Gastrocnemius medialis (tissue), 4 donors: ENCODE measurements at regions of chr12 and their contacts with region 1.

Region 1: GRCh38 chr12:49967042-49967776 is 5.5 kb downstream of the AQP5 start:
- DNase-seq: peak; percentile 48 to 64
- ATAC-seq: peak; percentile 76 to 86
- H3K4me3 ChIP-seq: peak overlapping the region; percentile 36 to 50 (median 40)
- H3K27ac ChIP-seq: no peak overlapping the region
- H3K4me1 ChIP-seq: peaks cover 0 to 5% of the 10 kb centered on the region in 2 donors
- H3K27me3 ChIP-seq: peaks cover 4 to 22% (median 17%) of the 10 kb centered on the region in 3 donors
- CTCF ChIP-seq: peak; percentile 66 to 91 (median 88)
- POLR2A ChIP-seq: no peak

Region 2: DNA sequence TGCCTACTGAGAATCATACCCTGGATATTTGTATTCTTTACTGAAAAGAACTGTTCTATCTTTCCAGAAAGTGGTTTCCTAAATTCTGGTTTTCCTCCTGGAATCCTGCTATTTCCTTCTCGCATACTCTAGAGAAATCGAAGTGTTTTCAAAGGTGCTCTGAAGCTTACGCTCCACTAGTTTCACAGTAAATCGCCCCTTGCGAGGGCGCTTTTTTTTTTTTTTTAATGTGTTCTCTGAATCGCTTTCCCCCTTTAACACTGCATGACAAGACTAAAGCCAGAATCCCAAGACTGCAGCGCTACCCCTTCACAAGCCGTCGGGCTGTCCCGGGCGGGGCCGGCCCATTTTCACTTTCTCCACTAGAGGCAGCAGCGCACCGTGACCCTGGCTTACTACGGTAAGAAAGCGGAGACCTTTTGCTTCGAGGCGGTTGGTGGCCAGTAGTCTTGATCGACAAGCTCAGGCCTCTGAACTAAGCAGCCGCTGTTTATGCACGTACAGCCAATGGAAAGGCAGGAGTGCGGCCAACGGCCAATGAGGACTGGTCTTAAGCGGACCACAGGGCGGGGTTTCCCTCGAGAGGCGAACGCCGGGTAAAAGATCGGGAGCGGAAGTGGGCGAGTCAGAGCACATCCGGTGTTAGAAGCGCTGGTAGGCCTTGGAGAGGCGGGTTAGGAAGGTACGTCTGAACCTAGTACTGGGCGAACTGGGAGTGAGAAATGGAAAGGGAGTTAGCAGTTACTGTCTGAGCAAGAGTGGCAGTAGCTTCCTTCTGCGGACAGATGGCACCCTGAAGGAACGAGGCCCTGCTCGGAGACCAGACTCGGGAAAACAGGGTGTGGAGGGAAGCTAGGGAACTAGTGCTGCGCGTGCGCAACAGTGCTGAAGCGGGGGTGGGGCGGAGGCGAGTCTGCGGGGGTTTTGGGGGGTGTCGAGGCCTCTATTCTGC is 226.0 kb before region 1 on chr12 and contains the start of gene TMBIM6:
- in situ Hi-C with region 1: no loop called
- intact Hi-C with region 1: no loop called
- DNase-seq: peak; percentile 100
- ATAC-seq: peak; percentile 98 to 99
- H3K4me3 ChIP-seq: peak within 1 kb of the TSS; percentile 80 to 100 (median 88)
- H3K27ac ChIP-seq: peak within 1 kb of the TSS; percentile 97 to 100 (median 98)
- H3K4me1 ChIP-seq: peaks cover 31 to 38% of the 10 kb centered on the region in 2 donors
- H3K27me3 ChIP-seq: no peaks in the 10 kb centered on the region
- CTCF ChIP-seq: peak; percentile 91 to 98 (median 95)
- POLR2A ChIP-seq: peak; percentile 98 to 99
- total RNA-seq, gene TMBIM6: 181 to 310 (median 224) TPM

Region 3: GRCh38 chr12:49866859-49867579 is 100.2 kb before region 1 on chr12:
- in situ Hi-C with region 1: no loop called
- intact Hi-C with region 1: loop called (anchors 10 kb)
- DNase-seq: peak in 1 of 2 donors; percentile 57
- ATAC-seq: peak; percentile 43 to 73
- H3K4me3 ChIP-seq: no peak overlapping the region
- H3K27ac ChIP-seq: no peak overlapping the region
- H3K4me1 ChIP-seq: peaks cover 10 to 19% of the 10 kb centered on the region in 2 donors
- H3K27me3 ChIP-seq: no peaks in the 10 kb centered on the region
- CTCF ChIP-seq: peak; percentile 79 to 97 (median 90)
- POLR2A ChIP-seq: no peak

Region 4: DNA sequence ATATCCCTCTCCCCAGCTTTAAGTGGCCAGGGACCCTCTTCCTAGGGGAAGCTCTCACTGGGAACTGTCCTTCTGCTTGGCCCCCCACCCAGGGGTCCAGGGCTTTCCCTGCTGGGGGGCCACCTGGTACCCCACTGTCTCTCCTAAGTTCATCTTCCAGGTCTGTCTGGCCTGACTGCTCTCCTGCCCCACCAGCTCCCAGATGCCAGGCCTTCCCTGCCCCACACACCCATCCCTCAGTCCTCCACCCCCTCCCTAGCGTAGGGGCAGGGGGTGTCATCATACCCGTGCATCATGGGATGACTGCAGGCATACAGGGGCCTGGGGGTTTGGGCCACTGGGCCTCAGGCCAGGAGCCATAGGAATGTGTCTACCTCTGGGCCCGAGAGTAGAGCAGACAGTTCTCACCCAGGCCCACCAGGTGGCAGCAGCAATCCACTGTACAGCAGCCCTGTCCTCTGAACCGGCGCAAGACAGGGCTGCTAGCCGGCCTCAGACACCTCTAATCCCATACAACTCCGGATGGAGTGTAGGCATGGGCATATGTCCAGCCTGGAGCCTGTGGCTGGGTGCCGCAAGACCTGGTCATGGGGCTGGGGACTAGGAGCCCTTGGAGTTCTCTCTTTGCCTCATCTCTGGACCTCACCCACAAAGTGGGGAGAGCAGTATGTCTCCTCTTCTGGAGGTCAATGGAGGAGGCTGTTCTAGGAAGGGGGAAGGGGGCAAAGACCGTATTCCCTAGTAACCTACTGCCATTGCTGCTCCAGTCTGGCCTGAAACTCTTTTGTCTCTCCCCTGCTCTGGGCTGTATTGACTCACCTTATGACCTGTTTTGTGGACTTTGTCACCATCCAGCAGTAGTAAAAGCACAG is 108.0 kb after region 1 on chr12:
- in situ Hi-C with region 1: no loop called
- intact Hi-C with region 1: loop called (anchors 1 kb)
- DNase-seq: peak; percentile 62 to 77
- ATAC-seq: peak; percentile 88 to 89
- H3K4me3 ChIP-seq: no peak overlapping the region
- H3K27ac ChIP-seq: no peak overlapping the region
- H3K4me1 ChIP-seq: peaks cover 0 to 3% of the 10 kb centered on the region in 2 donors
- H3K27me3 ChIP-seq: no peaks in the 10 kb centered on the region
- CTCF ChIP-seq: peak; percentile 94 to 97 (median 95)
- POLR2A ChIP-seq: no peak

Region 5: GRCh38 chr12:50174971-50175715 is 207.9 kb after region 1 on chr12:
- in situ Hi-C with region 1: no loop called
- intact Hi-C with region 1: loop called (anchors 5 kb)
- DNase-seq: no peak
- ATAC-seq: no peak
- H3K4me3 ChIP-seq: no peak overlapping the region
- H3K27ac ChIP-seq: no peak overlapping the region
- H3K4me1 ChIP-seq: no peaks in the 10 kb centered on the region
- H3K27me3 ChIP-seq: no peaks in the 10 kb centered on the region
- CTCF ChIP-seq: peak; percentile 70 to 83 (median 72)
- POLR2A ChIP-seq: no peak